ENCODE measurements at regions of chr7 and their contacts with region 1.

Region 1: DNA sequence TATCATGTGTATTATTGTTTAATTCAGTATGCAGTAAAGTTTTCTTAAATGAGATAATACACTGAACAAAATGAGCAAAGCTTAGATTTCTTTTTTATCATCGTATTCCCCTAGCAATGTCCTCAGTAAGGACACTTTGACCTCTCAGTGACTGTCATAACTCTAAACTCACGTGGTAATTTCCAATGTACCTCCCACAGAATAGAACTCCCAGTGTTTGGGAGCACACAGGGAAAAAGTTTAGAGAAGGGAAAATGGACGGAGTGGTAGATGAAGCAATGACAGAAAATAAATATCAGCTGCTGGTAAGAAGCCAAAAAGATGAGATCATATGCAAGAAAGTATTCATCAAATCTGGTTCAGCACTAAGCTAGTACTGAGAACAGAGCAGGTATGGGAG is 758.6 kb upstream of the KCND2 start:
- DNase-seq: no peak
- ATAC-seq: no peak
- H3K4me3 ChIP-seq: no peak overlapping the region
- H3K27ac ChIP-seq: no peak overlapping the region
- H3K4me1 ChIP-seq: no peaks in the 10 kb centered on the region
- H3K27me3 ChIP-seq: no peaks in the 10 kb centered on the region
- CTCF ChIP-seq: no peak
- EP300 ChIP-seq: no peak
- POLR2A ChIP-seq: no peak
- RAD21 ChIP-seq: no peak

Region 2: DNA sequence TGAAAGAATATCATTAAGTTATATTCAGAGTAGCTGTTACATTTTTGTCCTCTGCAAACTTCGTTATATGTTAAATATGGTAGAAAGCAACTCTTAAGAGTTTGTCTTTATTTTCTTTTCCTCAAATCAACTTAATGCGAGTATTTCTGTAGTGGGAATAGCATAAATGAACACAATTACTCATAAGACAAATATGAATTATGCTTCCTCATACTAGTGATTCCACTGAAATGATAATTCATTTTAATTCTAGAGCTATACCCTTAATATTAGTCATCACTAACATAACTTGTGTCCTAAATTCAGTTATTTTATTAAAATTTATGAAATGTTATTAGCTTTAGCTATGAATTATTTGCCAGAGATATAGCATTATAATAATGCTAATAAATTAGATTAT is 61.9 kb before region 1 on chr7:
- CTCF ChIA-PET with region 1: no interaction called
- POLR2A ChIA-PET with region 1: no interaction called
- RAD21 ChIA-PET with region 1: no interaction called
- SMC1A ChIA-PET with region 1: no interaction called
- in situ Hi-C with region 1: no loop called
- intact Hi-C with region 1: loop called (anchors 10 kb)
- DNase-seq: no peak
- ATAC-seq: no peak
- H3K4me3 ChIP-seq: no peak overlapping the region
- H3K27ac ChIP-seq: no peak overlapping the region
- H3K4me1 ChIP-seq: no peaks in the 10 kb centered on the region
- H3K27me3 ChIP-seq: no peaks in the 10 kb centered on the region
- CTCF ChIP-seq: no peak
- EP300 ChIP-seq: no peak
- POLR2A ChIP-seq: no peak
- RAD21 ChIP-seq: no peak

Region 3: GRCh38 chr7:119482209-119482608 is 32.1 kb before region 1 on chr7:
- CTCF ChIA-PET with region 1: no interaction called
- POLR2A ChIA-PET with region 1: no interaction called
- RAD21 ChIA-PET with region 1: no interaction called
- SMC1A ChIA-PET with region 1: no interaction called
- in situ Hi-C with region 1: no loop called
- intact Hi-C with region 1: no loop called
- DNase-seq: peak; percentile 12
- ATAC-seq: peak; percentile 99
- H3K4me3 ChIP-seq: no peak overlapping the region
- H3K27ac ChIP-seq: no peak overlapping the region
- H3K4me1 ChIP-seq: no peaks in the 10 kb centered on the region
- H3K27me3 ChIP-seq: no peaks in the 10 kb centered on the region
- CTCF ChIP-seq: peak; percentile 41 to 54 (median 43); a peak in 4 of 6 replicates
- EP300 ChIP-seq: no peak
- POLR2A ChIP-seq: no peak
- RAD21 ChIP-seq: peak; percentile 26; the same call in 1 of the 2 replicates

Region 4: DNA sequence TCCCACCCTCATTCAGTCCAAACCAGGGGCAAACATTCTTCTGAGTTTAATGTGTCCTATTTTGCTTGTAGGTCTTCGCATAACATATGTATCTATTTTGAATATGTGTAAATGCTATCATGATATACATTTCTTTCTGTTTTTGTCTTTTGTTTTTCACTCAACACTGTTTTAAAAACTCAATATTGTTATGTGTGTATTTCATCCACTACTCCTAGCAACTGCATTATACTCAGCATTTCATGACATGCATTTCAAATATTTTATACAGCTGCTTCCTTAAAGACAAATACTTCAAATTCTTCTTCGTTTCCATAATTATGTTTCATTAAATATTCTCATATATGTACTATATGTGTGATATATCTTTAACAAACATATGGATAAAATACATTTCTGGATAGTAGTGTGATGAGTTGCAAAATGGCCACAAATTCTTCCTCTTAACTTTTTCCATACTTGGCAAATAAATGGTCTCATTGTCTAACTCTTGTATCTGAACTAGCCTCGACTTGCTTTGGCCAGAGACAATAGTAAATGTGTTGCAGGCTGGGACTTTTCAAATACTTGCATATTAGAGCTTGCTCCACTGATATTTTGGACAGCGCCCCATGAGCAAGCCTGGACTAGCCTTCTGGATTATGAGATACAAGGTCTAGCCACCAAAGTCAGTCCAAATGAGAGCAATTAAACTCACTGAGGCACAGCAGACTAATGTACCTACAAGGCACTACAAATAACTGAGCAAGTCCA is 219.0 kb after region 1 on chr7:
- CTCF ChIA-PET with region 1: no interaction called
- POLR2A ChIA-PET with region 1: no interaction called
- RAD21 ChIA-PET with region 1: no interaction called
- SMC1A ChIA-PET with region 1: no interaction called
- in situ Hi-C with region 1: no loop called
- intact Hi-C with region 1: no loop called
- DNase-seq: no peak
- ATAC-seq: no peak
- H3K4me3 ChIP-seq: no peak overlapping the region
- H3K27ac ChIP-seq: no peak overlapping the region
- H3K4me1 ChIP-seq: no peaks in the 10 kb centered on the region
- H3K27me3 ChIP-seq: no peaks in the 10 kb centered on the region
- CTCF ChIP-seq: no peak
- EP300 ChIP-seq: no peak
- POLR2A ChIP-seq: no peak
- RAD21 ChIP-seq: no peak

Region 5: GRCh38 chr7:119996634-119997033 is 482.3 kb after region 1 on chr7:
- CTCF ChIA-PET with region 1: no interaction called
- POLR2A ChIA-PET with region 1: no interaction called
- RAD21 ChIA-PET with region 1: no interaction called
- SMC1A ChIA-PET with region 1: no interaction called
- in situ Hi-C with region 1: no loop called
- intact Hi-C with region 1: no loop called
- DNase-seq: no peak
- ATAC-seq: peak; percentile 44
- H3K4me3 ChIP-seq: no peak overlapping the region
- H3K27ac ChIP-seq: no peak overlapping the region
- H3K4me1 ChIP-seq: no peaks in the 10 kb centered on the region
- H3K27me3 ChIP-seq: no peaks in the 10 kb centered on the region
- CTCF ChIP-seq: no peak
- EP300 ChIP-seq: no peak
- POLR2A ChIP-seq: no peak
- RAD21 ChIP-seq: no peak